ENCODE measurements at regions of chr12 and their contacts with region 1.

Region 1: GRCh38 chr12:49515266-49515665 is 23.6 kb upstream of the KCNH3 start:
- DNase-seq: peak; percentile 90
- ATAC-seq: peak; percentile 86
- H3K4me3 ChIP-seq: no peak overlapping the region
- H3K27ac ChIP-seq: no peak overlapping the region
- H3K4me1 ChIP-seq: peaks cover 5% of the 10 kb centered on the region
- H3K27me3 ChIP-seq: no peaks in the 10 kb centered on the region
- CTCF ChIP-seq: no peak
- POLR2A ChIP-seq: no peak
- RAD21 ChIP-seq: no peak

Region 2: DNA sequence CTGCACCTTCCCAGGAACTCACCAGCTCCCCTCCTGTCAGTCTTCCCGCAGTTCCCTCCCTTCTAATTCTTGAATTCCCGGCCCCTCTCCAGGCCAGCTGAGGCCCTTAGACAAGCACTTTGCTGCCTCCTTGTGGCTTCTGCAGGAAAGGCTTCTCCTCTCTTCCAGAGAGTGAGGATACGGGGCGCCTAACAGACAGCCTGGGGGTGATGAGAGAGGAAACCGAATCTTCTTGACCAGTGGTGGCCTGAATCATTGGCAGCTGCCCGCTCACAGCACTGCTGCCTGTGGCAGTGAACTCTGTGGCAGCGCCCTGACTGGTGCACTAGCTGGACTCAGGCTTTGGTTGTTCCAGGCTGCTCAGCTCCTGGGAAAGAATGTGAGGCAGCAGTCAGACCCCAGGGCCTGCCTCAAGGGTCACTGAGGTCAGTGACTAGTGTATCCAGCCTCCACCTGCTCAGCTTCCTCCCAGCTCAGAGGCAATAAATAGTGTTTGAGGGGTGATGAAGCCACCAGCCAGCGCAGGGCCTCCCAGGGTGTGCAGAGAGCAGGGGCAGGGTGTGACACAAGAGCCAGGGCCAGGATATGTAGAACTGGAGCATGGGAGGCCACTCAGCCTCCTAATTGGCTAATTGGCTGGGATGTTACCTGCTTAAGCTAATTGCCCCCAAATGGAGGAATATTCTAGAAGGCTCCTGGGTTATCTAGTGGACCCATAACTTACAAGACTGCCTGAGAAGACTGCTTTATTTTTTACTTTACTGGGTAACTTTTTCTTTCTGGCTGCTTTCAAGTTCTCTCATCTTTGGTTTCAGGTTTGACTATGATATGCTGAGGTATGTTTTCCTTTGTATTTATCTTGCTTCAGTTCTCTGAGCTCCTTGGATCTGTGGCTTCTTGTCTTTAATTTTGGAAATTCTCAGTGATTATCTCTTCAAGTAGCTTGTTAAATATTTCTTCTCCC is 65.6 kb after region 1 on chr12:
- CTCF ChIA-PET with region 1: interaction called, 9 read pairs
- POLR2A ChIA-PET with region 1: no interaction called
- dilution Hi-C with region 1: no loop called
- in situ Hi-C with region 1: no loop called
- intact Hi-C with region 1: loop called (anchors 5 kb)
- DNase-seq: peak; percentile 77
- ATAC-seq: peak; percentile 97
- H3K4me3 ChIP-seq: no peak overlapping the region
- H3K27ac ChIP-seq: no peak overlapping the region
- H3K4me1 ChIP-seq: peaks cover 2% of the 10 kb centered on the region; the same call in 1 of the 2 replicates
- H3K27me3 ChIP-seq: no peaks in the 10 kb centered on the region
- CTCF ChIP-seq: peak; percentile 84
- POLR2A ChIP-seq: no peak
- RAD21 ChIP-seq: peak; percentile 89

Measured in IMR-90 (cell line).